ENCODE measurements at regions of chr1 and their contacts with region 1.

Region 1: DNA sequence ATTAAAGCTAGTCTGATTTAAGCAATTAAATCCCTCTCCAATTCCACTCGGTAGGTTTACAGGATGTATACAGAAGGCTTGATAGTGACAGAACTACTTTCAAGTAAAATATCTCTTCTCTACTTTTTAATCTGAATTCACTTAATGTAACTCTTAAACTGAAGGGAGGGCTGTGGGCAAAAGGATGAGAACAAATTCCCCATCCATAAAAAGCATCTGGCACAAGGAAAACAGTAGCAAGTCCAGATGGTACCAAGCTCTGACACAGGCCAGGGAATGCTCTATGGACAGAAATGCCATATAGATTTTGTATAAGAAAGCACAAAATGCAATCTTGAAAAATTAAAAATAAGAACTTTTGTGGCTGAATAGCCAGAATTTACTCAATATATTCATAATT is 53.1 kb upstream of the USH2A start:
- DNase-seq: no peak
- ATAC-seq: no peak

Region 2: DNA sequence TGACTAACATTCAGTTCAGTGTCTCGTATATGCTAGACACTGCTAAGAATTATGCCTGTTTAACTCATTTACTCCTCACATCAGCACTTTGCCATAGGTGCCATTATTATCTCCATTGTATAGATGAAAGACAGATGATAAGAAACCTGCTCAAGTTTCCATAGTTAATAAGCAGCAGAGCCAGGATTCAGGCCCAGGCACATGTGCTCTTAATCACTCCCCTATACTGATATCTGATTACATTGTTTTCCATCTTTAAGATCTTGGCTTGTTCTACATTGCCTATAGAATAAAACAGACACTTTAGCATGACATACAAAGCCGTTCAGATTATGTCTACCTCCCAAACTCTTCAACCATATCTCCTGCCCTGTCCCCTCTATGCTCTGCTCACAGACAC is 22.6 kb before region 1 on chr1:
- intact Hi-C with region 1: loop called (anchors 2 kb)
- DNase-seq: no peak
- ATAC-seq: no peak

Region 3: DNA sequence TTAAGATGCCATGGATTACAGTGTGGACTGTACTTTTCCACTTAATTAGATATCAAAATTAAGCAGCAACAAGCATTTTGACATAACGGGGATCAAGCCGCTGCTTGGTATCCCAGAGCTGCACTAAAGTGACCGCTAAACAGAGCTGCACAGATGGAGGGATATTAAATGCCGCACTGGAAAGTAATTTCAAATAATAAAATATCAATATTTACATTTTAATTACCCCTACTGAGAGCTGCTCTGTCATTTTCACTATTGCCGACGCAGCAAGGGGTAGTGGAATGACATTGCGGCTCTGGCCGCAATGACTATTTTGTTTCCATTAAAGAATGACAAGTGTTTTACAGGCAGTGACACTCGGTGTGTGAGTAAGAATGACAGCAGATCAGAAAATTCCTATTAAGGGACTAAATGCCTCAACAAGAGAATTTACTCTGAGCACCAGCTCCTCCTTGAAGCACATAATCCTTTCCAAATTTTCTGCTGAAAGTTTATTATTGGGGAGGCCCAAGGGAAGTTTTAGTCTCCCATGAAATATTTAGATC is 56.0 kb after region 1 on chr1:
- intact Hi-C with region 1: no loop called
- DNase-seq: no peak
- ATAC-seq: no peak

Region 4: DNA sequence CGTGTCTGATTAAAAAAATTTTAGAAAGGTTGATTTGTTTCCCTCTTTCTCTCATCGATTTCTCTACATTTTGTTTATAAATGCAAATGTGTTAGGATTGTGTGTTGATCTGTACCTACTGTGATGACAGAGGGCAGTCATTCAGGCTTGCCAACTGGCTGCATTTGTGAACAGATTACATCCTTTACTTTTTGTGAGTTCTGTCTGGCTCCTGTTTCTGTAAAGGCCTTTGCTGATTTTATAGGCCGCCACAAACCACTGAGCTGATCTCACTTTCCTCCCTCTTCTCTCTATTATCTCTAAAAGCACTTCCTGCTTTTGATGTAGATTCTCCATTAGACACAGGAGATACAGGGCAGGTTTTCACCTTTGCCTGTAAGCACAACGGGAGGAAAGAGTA is 140.1 kb after region 1 on chr1:
- intact Hi-C with region 1: no loop called
- DNase-seq: no peak
- ATAC-seq: peak; percentile 71